A549 (cell line): ENCODE measurements at regions of chr12 and their contacts with region 1.

Region 1: DNA sequence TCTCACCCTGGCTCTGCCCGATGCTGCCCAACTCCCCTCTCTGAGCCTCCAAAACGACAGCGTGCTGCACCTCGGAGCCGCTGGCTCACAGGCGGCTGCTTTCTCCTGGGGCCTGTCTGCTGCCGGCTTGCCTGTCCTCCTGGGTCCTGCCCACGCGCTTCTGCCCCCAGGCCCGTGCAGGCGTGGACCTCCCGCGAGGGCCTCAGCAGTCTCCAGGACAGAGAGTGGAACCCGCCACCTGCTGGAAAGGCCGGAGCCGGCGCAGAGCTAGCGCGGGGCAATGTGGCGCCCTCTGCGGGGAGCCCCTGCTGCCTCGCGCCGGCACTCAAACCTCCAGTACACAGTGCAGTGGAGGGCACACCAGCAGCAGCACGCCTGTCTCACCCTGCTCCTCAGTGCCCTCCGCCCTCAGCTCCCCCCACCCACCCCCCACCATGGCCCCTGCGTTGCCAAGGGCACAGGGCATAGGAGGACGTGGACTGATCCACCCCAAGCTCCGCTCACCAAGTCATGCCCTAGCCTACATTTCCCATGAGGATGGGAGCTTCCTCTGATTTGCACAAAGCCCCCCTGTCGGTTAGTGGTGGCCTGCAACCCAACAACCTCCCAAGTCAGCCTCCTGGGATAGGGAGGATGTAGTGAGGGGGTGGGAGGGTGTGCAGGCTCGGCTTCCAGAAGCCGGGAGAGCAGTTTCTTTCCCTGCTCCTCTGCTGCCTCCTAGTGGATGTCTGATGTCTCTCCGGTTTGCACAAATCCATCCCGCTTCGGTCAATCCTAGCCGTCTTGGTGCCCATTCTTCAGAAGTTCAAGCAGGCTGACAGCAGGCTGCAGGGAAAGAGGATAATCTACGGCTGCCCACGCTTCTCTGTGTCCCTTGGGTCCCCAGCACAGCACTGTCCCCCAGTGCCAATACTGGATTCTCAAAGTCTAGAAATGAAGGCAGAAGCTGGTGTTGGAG is 25.2 kb downstream of the KRT8 start:
- DNase-seq: peak; percentile 82 to 98
- ATAC-seq: peak; percentile 88 to 90
- H3K4me3 ChIP-seq: 0 out of 3 replicates have a peak overlapping the region, but pooled peaks have one; percentile 14
- H3K27ac ChIP-seq: peak overlapping the region; percentile 94 to 97
- H3K4me1 ChIP-seq: peaks cover 61% of the 10 kb centered on the region
- CTCF ChIP-seq: peak; percentile 97
- EP300 ChIP-seq: no peak
- POLR2A ChIP-seq: 0 out of 2 replicates have a peak, but pooled peaks have one; percentile 23
- RAD21 ChIP-seq: peak; percentile 90 to 99

Region 2: GRCh38 chr12:52023182-52023975 is 856.3 kb before region 1 on chr12:
- CTCF ChIA-PET with region 1: interaction called, 20 read pairs
- POLR2A ChIA-PET with region 1: interaction called, 3 read pairs
- DNase-seq: peak; percentile 94 to 95
- ATAC-seq: peak; percentile 63 to 79
- H3K4me3 ChIP-seq: peak overlapping the region; percentile 71
- H3K27ac ChIP-seq: peak overlapping the region; percentile 83 to 93
- H3K4me1 ChIP-seq: peaks cover 32% of the 10 kb centered on the region
- CTCF ChIP-seq: peak; percentile 93
- EP300 ChIP-seq: no peak
- POLR2A ChIP-seq: peak; percentile 37
- RAD21 ChIP-seq: peak; percentile 88 to 95

Region 3: GRCh38 chr12:52171950-52172512 is 707.6 kb before region 1 on chr12:
- CTCF ChIA-PET with region 1: interaction called, 11 read pairs
- POLR2A ChIA-PET with region 1: no interaction called
- DNase-seq: peak; percentile 66 to 87
- ATAC-seq: peak; percentile 35 to 72
- H3K4me3 ChIP-seq: no peak overlapping the region
- H3K27ac ChIP-seq: peak overlapping the region; percentile 70 to 85
- H3K4me1 ChIP-seq: peaks cover 82% of the 10 kb centered on the region
- CTCF ChIP-seq: peak; percentile 63
- EP300 ChIP-seq: no peak
- POLR2A ChIP-seq: no peak
- RAD21 ChIP-seq: peak; percentile 64 to 73

Region 4: GRCh38 chr12:52278541-52279421 is 600.9 kb before region 1 on chr12:
- CTCF ChIA-PET with region 1: interaction called, 35 read pairs
- POLR2A ChIA-PET with region 1: interaction called, 18 read pairs
- DNase-seq: peak; percentile 87 to 92
- ATAC-seq: peak; percentile 31 to 49
- H3K4me3 ChIP-seq: peak overlapping the region; percentile 33; the same call in 2 of the 3 replicates
- H3K27ac ChIP-seq: peak overlapping the region; percentile 96 to 100
- H3K4me1 ChIP-seq: peaks cover 67% of the 10 kb centered on the region
- CTCF ChIP-seq: peak; percentile 96
- EP300 ChIP-seq: no peak
- POLR2A ChIP-seq: no peak
- RAD21 ChIP-seq: peak; percentile 85 to 89

Region 5: GRCh38 chr12:52338241-52338960 is 541.3 kb before region 1 on chr12:
- CTCF ChIA-PET with region 1: interaction called, 30 read pairs
- POLR2A ChIA-PET with region 1: no interaction called
- DNase-seq: no peak
- ATAC-seq: peak in 1 of 2 experiments; percentile 18; a peak in 2 of 6 replicates
- H3K4me3 ChIP-seq: no peak overlapping the region
- H3K27ac ChIP-seq: peak overlapping the region in 1 of 2 experiments; percentile 27; a peak in 3 of 6 replicates
- H3K4me1 ChIP-seq: peaks cover 21% of the 10 kb centered on the region
- CTCF ChIP-seq: no peak
- EP300 ChIP-seq: no peak
- POLR2A ChIP-seq: no peak
- RAD21 ChIP-seq: no peak

Region 6: DNA sequence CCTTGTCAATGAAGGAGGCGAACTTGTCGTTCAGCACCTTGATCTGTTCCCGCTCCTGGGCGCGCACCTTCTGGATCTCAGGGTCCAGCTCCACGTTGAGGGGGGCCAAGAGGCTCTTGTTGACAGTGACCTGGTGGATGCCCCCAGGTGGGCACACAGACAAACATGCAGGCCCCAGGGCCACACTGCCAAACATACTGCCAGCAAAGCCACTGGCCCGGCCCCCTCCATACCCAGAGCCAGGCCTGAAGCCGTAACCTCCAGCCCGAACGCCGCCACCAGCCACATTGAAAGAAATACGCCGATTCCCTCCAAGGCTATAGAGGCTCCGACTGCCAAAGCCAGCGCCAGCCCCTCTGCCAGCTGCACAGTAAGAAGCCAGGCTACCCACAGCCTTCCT is 306.4 kb before region 1 on chr12:
- CTCF ChIA-PET with region 1: interaction called, 492 read pairs
- POLR2A ChIA-PET with region 1: no interaction called
- DNase-seq: no peak
- ATAC-seq: no peak
- H3K4me3 ChIP-seq: no peak overlapping the region
- H3K27ac ChIP-seq: no peak overlapping the region
- H3K4me1 ChIP-seq: no peaks in the 10 kb centered on the region
- CTCF ChIP-seq: no peak
- EP300 ChIP-seq: no peak
- POLR2A ChIP-seq: no peak
- RAD21 ChIP-seq: no peak

Region 7: GRCh38 chr12:52942066-52942900 is 62.6 kb after region 1 on chr12:
- CTCF ChIA-PET with region 1: interaction called, 45 read pairs
- POLR2A ChIA-PET with region 1: no interaction called
- DNase-seq: no peak
- ATAC-seq: no peak
- H3K4me3 ChIP-seq: no peak overlapping the region
- H3K27ac ChIP-seq: peak overlapping the region; percentile 96 to 97
- H3K4me1 ChIP-seq: peaks cover 50% of the 10 kb centered on the region
- CTCF ChIP-seq: no peak
- EP300 ChIP-seq: no peak
- POLR2A ChIP-seq: no peak
- RAD21 ChIP-seq: no peak